K562 (cell line): ENCODE measurements at regions of chr1 and their contacts with region 1.

Region 1: GRCh38 chr1:111507411-111508201 is 4.2 kb upstream of the ADORA3 start:
- DNase-seq: peak; percentile 82 to 87 (median 84)
- ATAC-seq: peak; percentile 92
- H3K4me3 ChIP-seq: peak overlapping the region; percentile 33
- H3K27ac ChIP-seq: peak overlapping the region; percentile 88
- H3K4me1 ChIP-seq: peaks cover 22 to 24% of the 10 kb centered on the region in 2 experiments
- H3K27me3 ChIP-seq: no peaks in the 10 kb centered on the region
- CTCF ChIP-seq: peak in 1 of 3 experiments; percentile 45; a peak in 2 of 6 replicates
- EP300 ChIP-seq: peak; percentile 22; the same call in 1 of the 2 replicates
- POLR2A ChIP-seq: no peak; the same call in 1 of the 2 replicates
- RAD21 ChIP-seq: no peak; a peak in 1 of 4 replicates

Region 2: DNA sequence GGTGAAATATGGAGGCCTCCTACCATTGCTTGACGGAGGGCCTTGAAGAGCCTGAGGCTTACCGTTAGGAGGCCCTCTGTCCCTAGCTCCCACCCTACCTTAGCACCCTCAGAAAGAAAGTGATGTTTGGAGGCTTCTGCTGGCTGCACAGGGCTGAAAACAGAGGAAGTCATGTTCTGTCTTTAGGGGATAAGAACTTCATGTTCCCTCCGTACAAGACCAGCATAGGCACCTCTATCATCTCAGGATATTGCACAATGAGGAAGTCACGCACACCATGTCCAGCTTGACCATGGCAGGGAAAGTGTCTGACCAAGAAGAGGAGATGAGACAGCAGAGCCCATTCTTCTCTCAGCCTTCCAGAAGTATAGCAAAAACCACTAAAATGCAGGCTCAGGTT is 18.0 kb before region 1 on chr1:
- CTCF ChIA-PET with region 1: no interaction called
- POLR2A ChIA-PET with region 1: interaction called, 18 read pairs
- in situ Hi-C with region 1: no loop called
- intact Hi-C with region 1: no loop called
- DNase-seq: no peak
- ATAC-seq: peak; percentile 59
- H3K4me3 ChIP-seq: no peak overlapping the region
- H3K27ac ChIP-seq: no peak overlapping the region
- H3K4me1 ChIP-seq: no peaks in the 10 kb centered on the region; a peak in 1 of 5 replicates
- H3K27me3 ChIP-seq: peaks cover 19 to 47% of the 10 kb centered on the region in 2 experiments; a peak in 4 of 5 replicates
- CTCF ChIP-seq: no peak
- EP300 ChIP-seq: no peak
- POLR2A ChIP-seq: no peak
- RAD21 ChIP-seq: no peak

Region 3: DNA sequence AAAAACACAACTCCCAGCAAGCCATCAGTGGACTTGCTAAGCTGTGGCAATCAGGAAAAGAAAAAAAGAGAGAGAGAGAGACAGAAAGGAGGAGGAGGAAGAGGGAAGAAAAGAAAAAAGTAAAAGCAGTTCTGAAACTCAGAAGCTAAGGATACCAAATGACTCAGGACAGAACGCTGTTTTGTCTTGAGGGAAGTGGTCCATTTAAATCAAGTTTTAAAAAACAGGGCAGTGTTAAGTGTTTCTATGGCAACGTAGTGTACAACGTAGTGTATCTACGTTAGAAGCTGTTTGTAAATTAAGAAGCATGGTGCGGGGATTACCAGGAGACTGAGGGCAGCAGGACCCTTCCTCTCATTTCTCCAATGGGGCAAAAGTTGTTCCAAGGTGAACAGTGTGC is 10.0 kb before region 1 on chr1:
- CTCF ChIA-PET with region 1: no interaction called
- POLR2A ChIA-PET with region 1: interaction called, 29 read pairs
- in situ Hi-C with region 1: no loop called
- intact Hi-C with region 1: no loop called
- DNase-seq: no peak
- ATAC-seq: no peak
- H3K4me3 ChIP-seq: no peak overlapping the region
- H3K27ac ChIP-seq: no peak overlapping the region
- H3K4me1 ChIP-seq: no peaks in the 10 kb centered on the region
- H3K27me3 ChIP-seq: peaks cover 12 to 15% of the 10 kb centered on the region in 2 experiments; a peak in 4 of 5 replicates
- CTCF ChIP-seq: no peak
- EP300 ChIP-seq: no peak
- POLR2A ChIP-seq: no peak
- RAD21 ChIP-seq: no peak

Region 4: DNA sequence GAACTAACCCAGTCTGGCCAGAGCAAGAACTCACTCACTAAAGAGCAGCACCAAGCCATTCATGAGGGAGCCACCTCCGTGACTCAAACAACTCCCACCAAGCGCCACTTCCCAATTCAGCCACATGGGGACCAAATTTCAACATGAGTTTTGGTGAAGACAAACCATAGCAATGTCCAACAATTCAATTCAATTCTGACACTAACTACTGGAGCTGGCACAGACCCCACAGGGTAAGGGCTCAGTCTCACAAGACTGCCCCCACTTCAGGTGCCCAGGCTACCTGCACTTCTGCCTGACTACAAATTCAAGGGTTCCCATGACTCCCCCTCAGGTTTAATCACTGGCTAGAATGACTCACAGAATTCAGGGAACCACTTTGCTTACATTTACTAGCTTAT is 63.2 kb after region 1 on chr1:
- CTCF ChIA-PET with region 1: no interaction called
- POLR2A ChIA-PET with region 1: no interaction called
- in situ Hi-C with region 1: no loop called
- intact Hi-C with region 1: no loop called
- DNase-seq: peak; percentile 39 to 70 (median 50)
- ATAC-seq: peak; percentile 92
- H3K4me3 ChIP-seq: no peak overlapping the region
- H3K27ac ChIP-seq: no peak overlapping the region
- H3K4me1 ChIP-seq: peaks cover 0 to 17% of the 10 kb centered on the region in 2 experiments; a peak in 3 of 5 replicates
- H3K27me3 ChIP-seq: peaks cover 0 to 3% of the 10 kb centered on the region in 2 experiments; a peak in 1 of 5 replicates
- CTCF ChIP-seq: peak; percentile 52 to 71 (median 59)
- EP300 ChIP-seq: no peak
- POLR2A ChIP-seq: no peak
- RAD21 ChIP-seq: peak in 1 of 2 experiments; percentile 46; a peak in 2 of 4 replicates

Region 5: DNA sequence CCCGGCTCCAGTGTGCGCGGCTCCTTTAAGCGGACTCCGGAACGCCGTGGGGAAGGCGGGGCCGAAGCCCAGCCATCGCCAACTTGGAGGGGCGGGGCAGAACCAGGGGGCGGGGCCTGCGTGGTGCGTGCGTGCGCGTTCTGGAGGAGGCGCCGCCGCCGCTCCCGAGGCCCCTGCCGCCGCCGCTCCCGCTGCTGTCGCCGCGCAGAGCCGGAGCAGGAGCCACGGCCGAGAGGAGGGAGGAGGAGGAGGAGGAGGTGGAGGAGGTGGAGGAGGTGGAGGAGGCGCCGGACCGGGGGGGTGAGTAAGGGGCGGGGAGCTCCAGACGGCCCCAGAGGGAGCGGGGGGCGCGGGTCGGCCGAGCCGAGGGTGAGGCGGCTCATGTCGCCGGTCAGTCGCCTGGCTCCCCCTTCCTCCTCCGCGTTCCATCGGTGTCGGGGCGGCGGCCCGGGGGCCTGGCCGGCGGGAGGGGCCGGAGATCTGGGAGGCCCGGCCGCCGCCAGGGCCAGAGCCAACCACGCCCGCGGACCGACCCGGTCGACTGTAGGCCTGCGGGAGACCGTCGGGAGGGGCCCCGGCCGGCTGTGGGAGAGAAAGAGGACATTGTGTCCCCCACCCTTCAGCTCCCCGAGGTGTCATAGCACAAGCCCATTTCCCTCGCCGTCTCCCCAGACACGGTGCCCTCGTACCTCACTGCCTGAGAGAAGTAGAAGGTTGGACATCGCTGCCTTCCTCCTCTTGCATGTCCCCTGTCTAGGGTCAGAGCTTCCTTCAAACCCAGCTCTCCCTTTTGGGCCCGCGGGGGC is 112.2 kb after region 1 on chr1 and contains the start of gene RAP1A:
- CTCF ChIA-PET with region 1: no interaction called
- POLR2A ChIA-PET with region 1: interaction called, 3 read pairs
- in situ Hi-C with region 1: no loop called
- intact Hi-C with region 1: loop called (anchors 1 kb)
- DNase-seq: peak; percentile 96 to 99 (median 98)
- ATAC-seq: peak; percentile 88
- H3K4me3 ChIP-seq: peak within 1 kb of the TSS; percentile 76
- H3K27ac ChIP-seq: peak within 1 kb of the TSS; percentile 78
- H3K4me1 ChIP-seq: peaks cover 3 to 46% of the 10 kb centered on the region in 2 experiments
- H3K27me3 ChIP-seq: no peaks in the 10 kb centered on the region
- CTCF ChIP-seq: no peak
- EP300 ChIP-seq: no peak
- POLR2A ChIP-seq: peak; percentile 73
- RAD21 ChIP-seq: 0 out of 4 replicates have a peak, but pooled peaks of 1 of the 2 experiments have one; percentile 3
- polyA plus RNA-seq, gene RAP1A: 21.3 to 28.9 TPM

Region 6: GRCh38 chr1:111656086-111657017 is 148.7 kb after region 1 on chr1:
- CTCF ChIA-PET with region 1: interaction called, 41 read pairs
- POLR2A ChIA-PET with region 1: interaction called, 5 read pairs
- in situ Hi-C with region 1: loop called (anchors 5 kb)
- intact Hi-C with region 1: loop called (anchors 1 kb)
- DNase-seq: peak; percentile 36 to 69 (median 48)
- ATAC-seq: peak; percentile 38; the same call in 2 of the 3 replicates
- H3K4me3 ChIP-seq: no peak overlapping the region
- H3K27ac ChIP-seq: no peak overlapping the region
- H3K4me1 ChIP-seq: peaks cover 5 to 28% of the 10 kb centered on the region in 2 experiments; a peak in 4 of 5 replicates
- H3K27me3 ChIP-seq: no peaks in the 10 kb centered on the region
- CTCF ChIP-seq: peak; percentile 57 to 87 (median 74); a peak in 5 of 6 replicates
- EP300 ChIP-seq: no peak
- POLR2A ChIP-seq: no peak
- RAD21 ChIP-seq: peak; percentile 92 to 96

Region 7: GRCh38 chr1:111769517-111770146 is 262.0 kb after region 1 on chr1:
- CTCF ChIA-PET with region 1: interaction called, 3 read pairs
- POLR2A ChIA-PET with region 1: interaction called, 3 read pairs
- in situ Hi-C with region 1: no loop called
- intact Hi-C with region 1: loop called (anchors 5 kb)
- DNase-seq: peak; percentile 65 to 80 (median 68)
- ATAC-seq: peak; percentile 76
- H3K4me3 ChIP-seq: no peak overlapping the region
- H3K27ac ChIP-seq: no peak overlapping the region
- H3K4me1 ChIP-seq: no peaks in the 10 kb centered on the region
- H3K27me3 ChIP-seq: peaks cover 2 to 6% of the 10 kb centered on the region in 2 experiments; a peak in 3 of 5 replicates
- CTCF ChIP-seq: peak; percentile 68 to 96 (median 82)
- EP300 ChIP-seq: no peak
- POLR2A ChIP-seq: no peak; the same call in 1 of the 2 replicates
- RAD21 ChIP-seq: peak; percentile 94 to 95